Posterior vena cava (tissue), 2 donors: ENCODE measurements at regions of chr11 and their contacts with region 1.

Region 1: DNA sequence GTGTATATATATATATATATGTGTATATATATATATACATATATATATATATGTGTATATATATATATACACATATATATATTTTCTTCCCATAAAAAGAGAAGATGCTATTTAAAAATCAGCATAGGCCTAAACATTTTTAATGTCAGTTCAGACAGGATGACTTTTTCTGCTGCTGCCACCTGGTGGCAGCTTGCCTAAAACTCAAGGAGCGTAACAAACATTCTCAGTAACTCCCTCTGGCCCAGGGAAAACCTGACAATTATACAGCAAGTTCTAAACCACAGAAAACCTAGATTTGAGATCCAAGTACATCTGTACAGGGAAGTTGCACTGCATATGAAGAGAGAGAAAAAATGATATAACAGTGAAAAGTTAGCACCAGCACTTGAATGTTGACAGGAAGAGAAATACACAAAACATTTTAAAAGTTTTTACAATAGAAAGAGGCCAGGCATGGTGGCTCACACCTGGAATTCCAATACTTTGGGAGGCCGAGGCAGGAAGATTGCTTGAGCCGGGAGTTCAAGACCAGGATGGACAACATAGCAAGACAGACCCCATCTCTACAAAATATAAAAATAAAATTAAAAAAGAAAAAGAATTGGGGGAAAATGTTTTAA is 16.6 kb downstream of the OR8A1 start:
- DNase-seq: no peak

Region 2: DNA sequence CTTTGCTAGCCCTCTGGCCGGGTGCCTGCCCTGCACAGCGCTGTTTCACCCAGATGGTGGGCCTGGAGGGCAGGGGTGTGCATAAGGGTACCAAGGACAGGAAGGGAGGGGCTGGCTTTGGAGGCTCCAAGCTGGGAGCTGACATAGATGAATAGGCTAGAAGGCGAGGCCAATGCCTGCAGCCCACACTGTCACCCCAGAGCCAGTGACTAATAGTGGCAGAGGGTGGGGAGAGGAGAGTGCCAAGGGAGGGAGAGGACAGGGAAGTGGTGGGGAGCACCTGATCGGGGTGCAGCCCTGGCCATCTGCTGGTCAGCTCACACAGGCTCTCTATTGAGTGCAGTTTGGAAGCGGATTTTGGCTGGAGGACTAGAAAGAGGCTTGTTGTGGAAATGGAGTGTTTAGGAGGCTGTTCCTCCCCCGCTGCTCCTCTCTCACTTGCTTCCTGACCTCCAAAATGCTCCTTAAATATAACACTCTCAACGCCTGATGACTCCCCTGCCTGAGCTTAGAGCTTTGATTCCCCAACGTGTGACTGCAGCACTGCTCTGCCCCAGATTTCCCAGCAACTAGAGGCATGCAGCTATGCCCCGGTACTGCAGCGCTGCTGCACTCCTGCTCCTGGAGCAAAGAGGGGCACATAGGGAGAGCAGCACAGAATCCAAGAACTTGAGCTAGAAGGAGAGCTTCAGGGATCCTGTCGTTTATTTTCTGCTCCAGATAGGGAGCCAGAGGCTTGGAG is 1067.1 kb before region 1 on chr11:
- intact Hi-C with region 1: no loop called
- DNase-seq: no peak

Region 3: GRCh38 chr11:124070915-124071635 is 515.3 kb before region 1 on chr11:
- intact Hi-C with region 1: loop called in 1 of 2 experiments (anchors 10 kb)
- DNase-seq: peak; percentile 89

Region 4: DNA sequence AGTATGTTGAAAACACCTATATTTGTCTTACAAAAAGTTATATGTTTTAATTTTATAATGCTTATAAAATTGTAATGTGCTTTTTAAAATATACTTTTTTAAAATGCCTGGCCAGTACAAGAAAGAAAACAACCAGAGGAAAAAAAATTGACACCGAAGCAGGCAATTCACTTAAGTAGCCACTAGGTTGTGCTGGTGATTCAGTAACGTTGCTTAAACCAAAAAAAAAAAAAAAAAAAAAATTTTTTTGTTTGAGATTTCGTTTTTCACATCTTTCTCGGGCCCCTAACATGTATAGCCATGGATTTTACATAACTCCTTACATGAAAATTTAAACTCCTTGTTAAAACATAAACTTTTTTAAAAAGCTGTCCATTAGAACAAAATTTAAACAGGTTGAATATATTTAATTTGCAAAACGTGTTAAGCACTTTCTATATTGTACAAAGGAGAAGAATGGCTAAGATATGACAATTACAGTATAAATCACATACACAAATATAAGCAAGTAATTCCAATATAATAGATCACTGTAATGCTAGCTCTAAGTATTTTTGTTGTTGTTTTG is 170.9 kb before region 1 on chr11:
- intact Hi-C with region 1: loop called in 1 of 2 experiments (anchors 10 kb)
- DNase-seq: no peak